ENCODE measurements at regions of chr4 and their contacts with region 1.

Region 1: GRCh38 chr4:94451695-94452475 is at the start of gene PDLIM5:
- DNase-seq: peak; percentile 31
- H3K4me3 ChIP-seq: peak within 1 kb of the TSS; percentile 78 to 99 (median 92)
- H3K27ac ChIP-seq: peak within 1 kb of the TSS; percentile 98 to 99 (median 99)
- H3K4me1 ChIP-seq: peaks cover 0 to 60% (median 23%) of the 10 kb centered on the region in 3 donors
- H3K27me3 ChIP-seq: no peaks in the 10 kb centered on the region
- CTCF ChIP-seq: peak in 1 of 6 experiments; percentile 19
- POLR2A ChIP-seq: peak; percentile 57 to 99 (median 81)
- total RNA-seq, gene PDLIM5: 57.0 to 204 (median 157) TPM

Region 2: DNA sequence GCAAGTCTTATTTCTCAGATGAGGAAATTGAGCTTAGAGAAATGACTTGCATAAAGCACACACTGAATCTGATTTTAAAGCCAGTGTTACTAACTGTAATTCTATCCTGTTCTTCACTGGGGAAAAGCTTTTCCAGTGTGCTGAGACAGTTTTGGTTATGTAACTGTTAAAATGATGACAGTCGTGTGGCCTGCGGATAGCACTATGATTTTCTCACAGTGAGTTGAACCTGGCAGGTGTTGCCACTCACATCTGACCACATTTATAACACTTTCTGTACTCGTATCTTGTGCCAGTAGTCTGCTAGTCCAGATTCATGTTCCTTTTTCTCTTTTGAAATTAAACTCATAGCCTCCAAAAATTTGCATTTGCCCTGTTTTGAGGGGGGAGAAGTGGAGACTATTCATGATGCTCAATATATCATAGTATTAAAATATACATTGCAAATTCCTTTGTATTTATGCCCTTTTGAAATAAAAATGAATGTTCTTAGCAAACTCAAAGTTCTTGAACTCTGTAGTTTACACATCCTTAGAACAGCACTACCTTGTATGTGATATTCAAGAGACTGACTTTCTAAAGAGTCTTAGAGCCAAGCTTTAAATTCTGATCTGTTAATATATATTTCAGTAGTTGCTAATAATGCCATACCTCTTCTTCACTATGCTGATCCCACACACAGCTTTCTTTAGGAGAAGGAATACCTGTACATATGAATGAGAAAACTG is 132.2 kb after region 1 on chr4:
- intact Hi-C with region 1: loop called (anchors 10 kb)
- DNase-seq: no peak
- H3K4me3 ChIP-seq: no peak overlapping the region
- H3K27ac ChIP-seq: no peak overlapping the region
- H3K4me1 ChIP-seq: no peaks in the 10 kb centered on the region
- H3K27me3 ChIP-seq: no peaks in the 10 kb centered on the region
- CTCF ChIP-seq: no peak
- POLR2A ChIP-seq: no peak

Measured in esophagus squamous epithelium (tissue), 5 donors.